ENCODE measurements at regions of chr15 and their contacts with region 1.

Region 1: GRCh38 chr15:67839929-67840748 is at the start of gene RNU6-1:
- DNase-seq: peak; percentile 94 to 97 (median 95)
- H3K4me3 ChIP-seq: peak within 1 kb of the TSS; percentile 80
- H3K27ac ChIP-seq: peak within 1 kb of the TSS; percentile 95 to 99
- H3K4me1 ChIP-seq: peaks cover 19% of the 10 kb centered on the region
- H3K27me3 ChIP-seq: no peaks in the 10 kb centered on the region
- CTCF ChIP-seq: no peak
- EP300 ChIP-seq: no peak
- POLR2A ChIP-seq: peak; percentile 92
- total RNA-seq, gene RNU6-1: not detected

Region 2: DNA sequence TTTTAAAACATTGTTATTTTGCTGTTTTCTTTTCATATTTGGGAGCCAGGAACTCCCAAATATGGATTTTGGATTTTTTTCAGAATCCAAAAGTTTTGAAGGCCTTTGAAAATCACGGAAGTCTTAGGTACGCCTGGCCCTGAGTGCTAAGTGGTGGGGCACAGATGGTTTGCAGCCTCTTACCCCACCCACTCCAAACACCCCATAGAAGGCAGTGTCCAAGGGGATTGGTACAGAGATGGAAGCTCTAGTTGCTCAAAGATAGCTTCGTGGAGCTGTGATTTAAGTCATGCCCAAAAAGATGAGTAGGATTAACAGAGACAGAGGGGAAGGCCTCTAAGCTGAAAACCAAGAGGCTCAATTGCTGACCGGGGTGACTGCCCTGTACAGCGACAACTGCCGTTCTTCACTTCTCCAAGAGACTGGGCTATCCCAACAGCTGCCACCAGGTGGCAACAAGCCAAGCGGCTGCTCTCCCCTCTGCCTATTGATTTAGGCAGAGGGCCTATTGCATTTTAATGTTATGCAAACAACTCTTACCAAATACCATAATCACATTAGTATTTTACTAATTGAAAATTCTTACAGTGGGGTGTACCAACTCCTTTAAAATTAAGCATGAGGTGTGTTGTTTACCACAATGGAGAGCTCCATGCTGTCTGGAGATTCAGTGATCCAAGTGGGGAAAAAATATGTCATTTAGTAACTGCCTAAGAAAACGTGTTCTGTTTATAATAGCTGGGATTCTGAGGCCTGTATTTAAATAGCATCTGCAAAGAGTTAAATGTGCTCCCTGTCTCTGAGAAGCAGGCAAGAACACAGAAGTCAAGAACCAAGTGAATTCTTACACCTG is 383.2 kb before region 1 on chr15:
- intact Hi-C with region 1: loop called in 2 of 4 experiments (anchors 5 to 10 kb)
- DNase-seq: peak; percentile 56 to 78 (median 72)
- H3K4me3 ChIP-seq: no peak overlapping the region
- H3K27ac ChIP-seq: no peak overlapping the region
- H3K4me1 ChIP-seq: no peaks in the 10 kb centered on the region
- H3K27me3 ChIP-seq: no peaks in the 10 kb centered on the region
- CTCF ChIP-seq: peak in 2 of 3 donors; percentile 22 to 51
- EP300 ChIP-seq: no peak
- POLR2A ChIP-seq: no peak

Region 3: DNA sequence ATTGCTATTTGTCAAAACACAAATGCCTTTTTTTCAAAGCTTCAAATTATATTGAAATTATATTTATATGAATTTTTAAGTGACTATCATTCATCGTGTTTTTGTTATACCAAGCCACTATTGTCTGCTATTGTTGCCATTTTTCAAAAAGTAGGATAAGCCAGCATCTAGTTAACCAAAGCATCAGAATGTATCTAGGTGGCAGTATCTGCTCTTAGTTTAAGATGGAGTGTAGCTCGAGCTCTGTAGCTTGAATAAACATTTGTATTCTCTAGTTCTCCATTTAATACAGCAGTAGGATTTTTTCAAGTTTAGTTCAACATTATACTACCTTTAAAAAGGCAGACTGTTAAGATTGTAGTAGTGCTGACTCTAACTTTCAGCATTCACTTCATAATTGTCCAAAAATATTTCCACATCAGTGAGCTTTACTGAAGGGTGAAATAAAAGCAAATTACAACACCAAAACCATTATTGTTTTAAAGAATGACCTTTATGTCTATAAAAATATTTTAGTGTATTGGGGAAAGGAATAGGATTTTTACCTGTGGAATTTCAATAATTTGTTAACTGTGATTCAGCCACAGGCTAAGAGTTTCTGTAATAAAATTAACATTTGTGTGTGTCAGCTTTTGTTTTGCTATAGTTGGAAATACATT is 338.8 kb before region 1 on chr15:
- intact Hi-C with region 1: loop called in 2 of 4 experiments (anchors 10 kb)
- DNase-seq: no peak
- H3K4me3 ChIP-seq: no peak overlapping the region
- H3K27ac ChIP-seq: no peak overlapping the region
- H3K4me1 ChIP-seq: no peaks in the 10 kb centered on the region
- H3K27me3 ChIP-seq: no peaks in the 10 kb centered on the region
- CTCF ChIP-seq: no peak
- EP300 ChIP-seq: no peak
- POLR2A ChIP-seq: no peak

Region 4: DNA sequence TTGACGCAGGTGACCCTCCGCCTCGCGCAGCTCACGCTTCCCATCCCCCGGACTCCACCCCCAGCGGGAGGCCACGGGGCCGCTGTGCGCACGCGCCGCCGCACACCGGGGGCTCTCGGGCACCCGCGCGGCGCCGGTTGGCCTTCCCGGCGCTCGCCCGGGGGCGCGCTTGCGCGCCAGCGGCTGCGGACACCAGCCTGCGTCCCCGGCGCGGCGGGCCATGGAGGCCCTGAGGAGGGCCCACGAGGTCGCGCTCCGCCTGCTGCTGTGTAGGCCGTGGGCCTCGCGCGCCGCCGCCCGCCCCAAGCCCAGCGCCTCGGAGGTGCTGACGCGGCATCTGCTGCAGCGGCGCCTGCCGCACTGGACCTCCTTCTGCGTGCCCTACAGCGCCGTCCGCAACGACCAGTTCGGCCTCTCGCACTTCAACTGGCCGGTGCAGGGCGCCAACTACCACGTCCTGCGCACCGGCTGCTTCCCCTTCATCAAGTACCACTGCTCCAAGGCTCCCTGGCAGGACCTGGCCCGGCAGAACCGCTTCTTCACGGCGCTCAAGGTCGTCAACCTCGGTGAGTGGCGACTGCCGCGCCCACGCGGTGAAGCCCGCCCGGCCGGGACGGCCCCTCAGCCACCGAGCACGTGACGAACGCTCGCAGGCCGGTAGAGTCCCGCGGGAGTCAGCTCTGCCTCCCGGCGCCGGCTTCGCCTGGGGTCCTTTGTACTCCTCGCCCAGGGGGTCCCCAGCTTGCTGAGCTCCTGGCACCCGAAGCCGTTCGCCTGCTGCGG is 318.9 kb before region 1 on chr15 and contains the start of gene C15orf61:
- intact Hi-C with region 1: loop called in 1 of 4 experiments (anchors 5 kb)
- DNase-seq: peak; percentile 84 to 91 (median 90)
- H3K4me3 ChIP-seq: peak within 1 kb of the TSS; percentile 89
- H3K27ac ChIP-seq: peak within 1 kb of the TSS; percentile 88 to 92
- H3K4me1 ChIP-seq: no peaks in the 10 kb centered on the region
- H3K27me3 ChIP-seq: no peaks in the 10 kb centered on the region
- CTCF ChIP-seq: peak in 1 of 3 donors; percentile 3
- EP300 ChIP-seq: no peak
- POLR2A ChIP-seq: peak; percentile 71
- total RNA-seq, gene C15orf61: 5.6 to 7.8 (median 7.2) TPM

Region 5: GRCh38 chr15:67542420-67543347 is 297.5 kb before region 1 on chr15 and contains the start of gene MAP2K5:
- intact Hi-C with region 1: loop called in 1 of 4 experiments (anchors 5 kb)
- DNase-seq: peak; percentile 80 to 89 (median 86)
- H3K4me3 ChIP-seq: peak within 1 kb of the TSS; percentile 94
- H3K27ac ChIP-seq: peak within 1 kb of the TSS; percentile 54 to 82
- H3K4me1 ChIP-seq: peaks cover 2% of the 10 kb centered on the region
- H3K27me3 ChIP-seq: no peaks in the 10 kb centered on the region
- CTCF ChIP-seq: no peak
- EP300 ChIP-seq: no peak
- POLR2A ChIP-seq: peak; percentile 44
- total RNA-seq, gene MAP2K5: 4.0 to 24.9 (median 23.2) TPM

Region 6: DNA sequence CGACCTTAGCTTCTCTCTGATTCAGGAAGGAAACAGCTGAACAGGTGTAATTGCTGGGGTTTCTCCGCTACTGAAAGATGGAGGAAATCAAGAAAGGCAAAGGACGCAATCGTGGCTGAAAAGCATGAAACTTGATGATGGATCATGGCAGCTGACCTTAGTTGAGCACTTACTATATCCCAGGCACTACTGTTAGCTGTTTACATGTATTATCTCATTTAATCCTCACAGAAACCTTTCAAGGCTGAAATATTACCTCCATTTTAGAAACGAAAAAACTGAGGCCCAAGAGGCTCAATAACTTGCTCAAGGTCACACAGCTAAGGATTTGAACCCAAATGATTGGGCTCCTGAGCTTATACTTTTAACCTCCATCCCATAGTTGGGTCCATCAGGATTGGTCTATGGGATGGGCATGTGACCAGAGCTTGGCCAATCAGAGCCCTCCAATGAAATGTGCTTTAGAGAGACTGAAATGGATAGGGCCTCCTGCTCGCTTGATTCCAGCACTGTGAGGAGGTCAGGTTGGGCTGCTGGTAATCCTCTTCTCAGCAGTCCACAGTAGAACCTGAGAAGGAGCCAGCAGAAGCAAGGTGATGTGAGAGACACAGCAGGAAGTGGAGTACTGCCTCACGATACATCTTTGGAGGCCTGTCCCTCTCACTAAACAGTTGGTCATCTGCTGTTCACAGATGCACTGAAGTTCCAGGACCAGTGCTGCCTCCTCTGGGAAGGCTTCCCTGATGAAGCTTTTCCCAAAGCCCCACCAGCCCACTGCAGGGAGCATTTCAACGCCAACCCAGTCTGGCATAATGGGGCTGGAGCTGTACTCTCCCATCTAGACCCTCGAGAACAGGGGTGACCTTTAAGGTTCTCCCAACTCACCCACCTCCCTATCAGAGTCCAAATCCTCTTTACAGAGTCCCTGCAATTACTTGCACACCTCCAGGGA is 379.0 kb after region 1 on chr15:
- intact Hi-C with region 1: no loop called
- DNase-seq: peak in 2 of 5 donors; percentile 3 to 13
- H3K4me3 ChIP-seq: no peak overlapping the region
- H3K27ac ChIP-seq: no peak overlapping the region
- H3K4me1 ChIP-seq: no peaks in the 10 kb centered on the region
- H3K27me3 ChIP-seq: no peaks in the 10 kb centered on the region
- CTCF ChIP-seq: no peak
- EP300 ChIP-seq: no peak
- POLR2A ChIP-seq: no peak